Activated naive CD4-positive, alpha-beta T cell treated with anti-CD3 and anti-CD28 coated beads, Interleukin-2, amount 10 ng/mL, durations not matched to agents 7 days and 5 days (primary cell): ENCODE measurements at regions of chr4 and their contacts with region 1.

Region 1: GRCh38 chr4:23135792-23136645 is 443.3 kb downstream of the GBA3 start:
- DNase-seq: no peak
- H3K4me3 Mint-ChIP-seq: no peak overlapping the region
- H3K27ac Mint-ChIP-seq: no peak overlapping the region
- H3K4me1 Mint-ChIP-seq: no peaks in the 10 kb centered on the region
- H3K27me3 Mint-ChIP-seq: no peaks in the 10 kb centered on the region

Region 2: GRCh38 chr4:23348789-23349498 is 212.9 kb after region 1 on chr4:
- CTCF ChIA-PET with region 1: no interaction called
- DNase-seq: no peak
- H3K4me3 Mint-ChIP-seq: no peak overlapping the region
- H3K27ac Mint-ChIP-seq: no peak overlapping the region
- H3K4me1 Mint-ChIP-seq: no peaks in the 10 kb centered on the region
- H3K27me3 Mint-ChIP-seq: no peaks in the 10 kb centered on the region

Region 3: GRCh38 chr4:24419181-24420034 is 1283.4 kb after region 1 on chr4:
- CTCF ChIA-PET with region 1: interaction called, 20 read pairs
- DNase-seq: peak; percentile 74
- H3K4me3 Mint-ChIP-seq: no peak overlapping the region
- H3K27ac Mint-ChIP-seq: no peak overlapping the region
- H3K4me1 Mint-ChIP-seq: no peaks in the 10 kb centered on the region
- H3K27me3 Mint-ChIP-seq: peaks cover 4% of the 10 kb centered on the region